ENCODE measurements at regions of chr12 and their contacts with region 1.

Region 1: DNA sequence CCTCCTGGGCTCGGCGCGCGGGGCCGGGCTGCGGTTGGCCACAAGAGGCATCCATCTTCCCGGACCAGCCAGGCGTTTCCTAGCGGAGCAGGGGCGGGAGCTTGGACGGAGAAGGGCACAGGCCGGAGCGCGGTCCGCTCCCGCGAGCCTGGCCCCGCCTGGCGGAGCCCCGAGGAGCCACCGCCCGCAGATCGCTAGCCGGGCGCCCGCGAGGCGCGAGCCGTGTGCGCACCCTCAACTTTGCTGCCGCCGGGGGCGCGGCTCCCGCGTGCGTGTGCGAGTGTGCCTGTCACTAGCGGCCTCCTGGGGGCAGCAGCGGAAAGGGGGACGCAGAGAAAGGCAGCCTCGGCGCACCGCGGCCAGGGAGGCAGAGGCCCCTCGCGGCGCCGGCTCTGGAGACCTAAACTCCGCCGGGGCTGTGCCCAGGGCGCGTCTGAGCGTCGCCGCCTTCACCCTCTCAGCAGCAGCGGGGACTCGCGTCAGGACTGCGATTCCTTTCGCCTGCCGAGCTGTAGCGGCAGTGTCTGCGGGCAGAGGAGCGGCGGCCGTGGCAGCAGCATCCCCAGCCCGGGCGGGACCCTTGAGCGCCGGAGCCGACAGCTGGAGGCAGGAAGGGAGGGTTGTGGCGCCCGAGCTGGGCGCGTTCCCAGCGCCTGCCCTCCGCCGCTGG is 644 bp upstream of the SRGAP1 start:
- DNase-seq: peak; percentile 92 to 97
- ATAC-seq: peak; percentile 90 to 93
- H3K4me3 ChIP-seq: peak overlapping the region; percentile 88
- H3K27ac ChIP-seq: peak overlapping the region; percentile 97 to 98
- H3K4me1 ChIP-seq: peaks cover 27% of the 10 kb centered on the region
- CTCF ChIP-seq: peak; percentile 98
- EP300 ChIP-seq: 0 out of 5 replicates have a peak, but pooled peaks of 1 of the 2 experiments have one; percentile 38
- POLR2A ChIP-seq: no peak
- RAD21 ChIP-seq: peak; percentile 97 to 99

Region 2: GRCh38 chr12:63869624-63870023 is 25.8 kb after region 1 on chr12:
- CTCF ChIA-PET with region 1: interaction called, 12 read pairs
- POLR2A ChIA-PET with region 1: no interaction called
- DNase-seq: no peak
- ATAC-seq: peak in 1 of 2 experiments; percentile 18; a peak in 1 of 6 replicates
- H3K4me3 ChIP-seq: no peak overlapping the region
- H3K27ac ChIP-seq: peak overlapping the region; percentile 45 to 62; a peak in 4 of 6 replicates
- H3K4me1 ChIP-seq: peaks cover 46% of the 10 kb centered on the region
- CTCF ChIP-seq: no peak
- EP300 ChIP-seq: no peak
- POLR2A ChIP-seq: no peak
- RAD21 ChIP-seq: no peak

Region 3: GRCh38 chr12:63917864-63918799 is 74.3 kb after region 1 on chr12:
- CTCF ChIA-PET with region 1: interaction called, 13 read pairs
- POLR2A ChIA-PET with region 1: interaction called, 23 read pairs
- DNase-seq: peak; percentile 80 to 97
- ATAC-seq: peak; percentile 75 to 81
- H3K4me3 ChIP-seq: peak overlapping the region; percentile 15; the same call in 2 of the 3 replicates
- H3K27ac ChIP-seq: peak overlapping the region; percentile 94 to 97
- H3K4me1 ChIP-seq: peaks cover 83% of the 10 kb centered on the region
- CTCF ChIP-seq: no peak
- EP300 ChIP-seq: peak; percentile 98 to 100; a peak in 4 of 5 replicates
- POLR2A ChIP-seq: no peak
- RAD21 ChIP-seq: peak; percentile 53 to 74

Region 4: DNA sequence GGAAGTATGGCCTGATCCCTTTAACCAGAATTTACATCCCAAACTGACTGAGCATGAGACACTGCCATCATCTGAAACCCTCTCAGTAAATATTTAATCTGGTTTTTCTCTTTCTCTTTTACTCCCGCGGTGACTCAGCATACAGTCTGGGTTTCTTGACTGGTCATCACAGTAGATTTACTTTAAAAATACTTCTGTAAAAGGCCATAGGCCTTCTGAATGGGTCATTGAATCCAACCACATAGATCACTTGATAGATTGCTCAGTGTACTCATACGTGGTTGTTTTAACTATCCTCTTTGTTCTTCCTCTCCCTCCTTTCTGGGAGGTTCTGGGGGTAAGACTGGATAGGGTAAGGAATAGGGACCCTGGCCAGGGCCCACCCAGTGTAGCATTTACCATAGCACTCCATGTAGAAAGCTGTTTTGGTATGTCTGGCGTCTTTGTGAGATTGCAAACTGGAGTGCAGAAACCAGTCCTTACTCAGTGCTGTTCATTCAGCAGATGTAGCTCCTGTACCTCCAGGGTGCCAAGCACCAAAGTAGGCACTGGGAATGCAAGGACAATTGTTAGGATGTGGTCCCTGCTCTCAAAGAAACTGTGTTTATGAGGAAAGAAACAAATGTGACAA is 166.3 kb after region 1 on chr12:
- CTCF ChIA-PET with region 1: interaction called, 14 read pairs
- POLR2A ChIA-PET with region 1: no interaction called
- DNase-seq: peak in 1 of 2 experiments; percentile 42
- ATAC-seq: peak; percentile 62 to 78; a peak in 5 of 6 replicates
- H3K4me3 ChIP-seq: no peak overlapping the region
- H3K27ac ChIP-seq: peak overlapping the region; percentile 73 to 78
- H3K4me1 ChIP-seq: peaks cover 46% of the 10 kb centered on the region
- CTCF ChIP-seq: no peak
- EP300 ChIP-seq: peak in 1 of 2 experiments; percentile 24; a peak in 1 of 5 replicates
- POLR2A ChIP-seq: no peak
- RAD21 ChIP-seq: no peak

Region 5: DNA sequence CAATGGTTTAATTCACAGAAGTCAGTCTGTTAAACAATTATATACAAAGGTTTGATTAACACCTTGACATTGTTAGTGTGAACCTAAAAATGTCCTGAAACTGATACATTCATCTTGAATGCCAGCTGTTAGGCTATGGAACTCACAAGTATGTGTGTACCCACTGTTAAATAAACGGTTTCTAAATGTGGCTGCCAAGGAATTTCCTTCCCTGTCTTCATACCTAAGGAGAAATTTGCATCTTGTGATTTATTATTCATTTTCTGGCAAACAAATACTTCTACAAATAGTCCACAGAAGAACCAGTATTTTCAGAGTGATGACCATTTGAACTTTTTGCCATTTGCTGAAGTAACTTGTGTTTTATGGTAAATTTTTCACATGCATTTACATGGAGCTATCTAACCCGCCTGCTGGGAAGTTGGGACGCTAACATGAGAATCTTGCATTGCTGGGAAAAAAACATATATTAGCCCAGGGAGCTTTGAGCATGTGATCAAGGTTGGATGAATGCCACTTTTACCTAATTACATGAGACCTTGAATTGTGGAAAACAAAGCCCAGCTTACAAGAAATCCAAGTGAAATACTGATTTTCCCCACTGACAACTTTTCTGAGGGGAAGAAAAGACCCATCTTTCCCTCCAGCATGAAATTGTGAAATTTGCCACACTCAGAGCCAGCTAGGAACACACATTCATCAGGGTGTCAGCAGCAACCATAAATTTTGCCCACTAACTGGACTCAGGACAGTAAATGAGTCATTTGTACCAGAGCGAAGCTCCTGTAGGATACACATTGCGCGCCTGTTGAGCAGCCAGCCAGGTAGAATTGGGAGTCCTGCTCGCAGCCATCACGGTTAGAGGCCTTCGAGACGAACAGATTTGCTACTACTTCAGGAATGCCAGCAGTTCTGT is 260.2 kb after region 1 on chr12:
- CTCF ChIA-PET with region 1: interaction called, 12 read pairs
- POLR2A ChIA-PET with region 1: no interaction called
- DNase-seq: no peak
- ATAC-seq: no peak; a peak in 1 of 6 replicates
- H3K4me3 ChIP-seq: no peak overlapping the region
- H3K27ac ChIP-seq: 0 out of 6 replicates have a peak overlapping the region, but pooled peaks of 1 of the 2 experiments have one; percentile 1
- H3K4me1 ChIP-seq: peaks cover 21% of the 10 kb centered on the region
- CTCF ChIP-seq: no peak
- EP300 ChIP-seq: no peak
- POLR2A ChIP-seq: no peak
- RAD21 ChIP-seq: no peak

Region 6: DNA sequence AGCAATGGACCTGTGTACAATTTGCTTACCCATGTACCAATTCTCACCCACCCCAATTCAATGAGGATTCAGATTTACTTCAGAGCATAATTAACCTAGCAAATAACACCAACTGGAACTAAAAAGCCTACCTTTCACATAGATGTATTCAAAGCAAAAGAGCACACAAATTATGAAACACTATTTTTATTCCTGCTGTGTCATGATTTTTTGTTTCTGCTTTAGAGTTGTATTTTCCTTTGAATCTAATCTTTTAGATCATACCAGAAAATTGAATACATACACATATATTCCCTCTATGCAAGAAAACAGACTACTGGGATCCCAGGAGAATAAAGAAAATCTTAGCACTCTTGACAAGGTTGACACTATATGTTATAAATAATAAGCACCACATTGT is 372.4 kb after region 1 on chr12:
- CTCF ChIA-PET with region 1: interaction called, 10 read pairs
- POLR2A ChIA-PET with region 1: no interaction called
- DNase-seq: no peak
- ATAC-seq: no peak
- H3K4me3 ChIP-seq: no peak overlapping the region
- H3K27ac ChIP-seq: no peak overlapping the region
- H3K4me1 ChIP-seq: peaks cover 18% of the 10 kb centered on the region
- CTCF ChIP-seq: no peak
- EP300 ChIP-seq: no peak
- POLR2A ChIP-seq: no peak
- RAD21 ChIP-seq: no peak

Region 7: GRCh38 chr12:64256166-64256800 is 412.4 kb after region 1 on chr12:
- CTCF ChIA-PET with region 1: interaction called, 206 read pairs
- POLR2A ChIA-PET with region 1: no interaction called
- DNase-seq: peak in 1 of 2 experiments; percentile 65
- ATAC-seq: peak; percentile 30 to 84; a peak in 3 of 6 replicates
- H3K4me3 ChIP-seq: no peak overlapping the region
- H3K27ac ChIP-seq: no peak overlapping the region
- H3K4me1 ChIP-seq: no peaks in the 10 kb centered on the region
- CTCF ChIP-seq: peak; percentile 91
- EP300 ChIP-seq: no peak
- POLR2A ChIP-seq: no peak
- RAD21 ChIP-seq: peak; percentile 97 to 98

Measured in A549 (cell line).